Cardiac septum (tissue), 1 donor: ENCODE measurements at regions of chr3 and their contacts with region 1.

Region 1: DNA sequence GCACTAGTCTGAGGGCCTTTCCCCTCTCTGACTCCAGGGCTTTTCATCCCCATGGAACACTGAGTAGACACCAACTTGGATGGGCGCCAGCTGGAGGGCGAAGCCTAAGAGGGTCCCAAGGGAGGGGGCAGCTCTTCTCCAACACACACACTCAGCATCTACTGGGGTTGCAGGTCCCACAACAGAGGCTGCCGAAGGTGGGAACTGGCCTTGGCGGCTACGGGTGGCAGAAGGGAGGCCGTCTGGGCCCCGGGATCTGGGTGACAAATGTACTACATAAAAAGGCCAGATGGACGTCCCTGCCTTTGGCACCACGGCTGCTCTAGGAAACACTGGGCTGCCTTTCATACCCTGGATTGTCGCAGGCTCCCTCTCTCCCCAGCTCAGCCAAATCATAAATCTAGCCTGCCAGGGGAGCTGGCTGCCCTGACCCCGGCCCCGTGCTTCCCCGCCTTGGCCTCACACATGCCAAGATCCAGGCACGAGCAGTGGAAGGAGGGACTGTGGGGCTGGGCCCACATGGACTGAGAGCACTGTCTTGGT is 31.5 kb downstream of the SEMA5B start:
- DNase-seq: no peak

Region 2: DNA sequence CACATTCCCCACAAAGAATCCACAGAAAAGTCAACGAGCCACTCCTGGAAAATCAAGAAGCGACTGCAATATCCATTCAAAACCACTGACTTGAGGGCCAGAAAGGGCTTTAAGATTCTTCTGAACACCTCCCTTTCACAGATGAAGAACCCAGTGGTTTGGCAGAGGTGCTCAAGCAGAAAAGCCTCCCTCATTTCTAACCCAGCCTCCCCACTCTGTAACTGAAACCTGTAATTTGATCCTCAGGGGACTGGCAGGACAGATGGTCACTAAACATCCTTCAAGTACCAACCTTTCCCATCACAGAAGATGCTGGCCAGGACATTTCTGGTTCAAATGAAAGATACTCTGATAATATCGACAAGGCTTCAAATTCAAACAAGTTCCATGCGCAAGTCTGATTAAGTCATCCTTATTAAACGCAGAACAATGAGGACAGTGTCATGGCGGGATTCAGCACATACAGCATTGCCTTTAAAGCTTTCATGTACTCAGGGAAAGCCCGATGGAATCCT is 25.9 kb after region 1 on chr3:
- intact Hi-C with region 1: loop called (anchors 2 kb)
- DNase-seq: no peak